ENCODE measurements at regions of chr6 and their contacts with region 1.

Region 1: GRCh38 chr6:133923938-133924593 is 29.0 kb upstream of the TBPL1 start:
- DNase-seq: peak; percentile 58 to 66
- H3K4me3 ChIP-seq: no peak overlapping the region
- H3K27ac ChIP-seq: no peak overlapping the region
- H3K4me1 ChIP-seq: no peaks in the 10 kb centered on the region
- H3K27me3 ChIP-seq: no peaks in the 10 kb centered on the region
- CTCF ChIP-seq: peak; percentile 98

Region 2: GRCh38 chr6:133973109-133973971 is 49.3 kb after region 1 on chr6:
- CTCF ChIA-PET with region 1: interaction called, 4 read pairs
- POLR2A ChIA-PET with region 1: no interaction called
- intact Hi-C with region 1: loop called (anchors 1 kb)
- DNase-seq: peak in 1 of 2 experiments; percentile 59
- H3K4me3 ChIP-seq: no peak overlapping the region
- H3K27ac ChIP-seq: peak overlapping the region; percentile 35
- H3K4me1 ChIP-seq: peaks cover 6% of the 10 kb centered on the region
- H3K27me3 ChIP-seq: no peaks in the 10 kb centered on the region
- CTCF ChIP-seq: peak; percentile 98